ENCODE measurements at regions of chr1 and their contacts with region 1.

Region 1: GRCh38 chr1:172109359-172109758 is 268.1 kb downstream of the DNM3 start:
- DNase-seq: no peak
- H3K4me3 ChIP-seq: no peak overlapping the region
- H3K27ac ChIP-seq: no peak overlapping the region
- H3K4me1 ChIP-seq: no peaks in the 10 kb centered on the region
- H3K27me3 ChIP-seq: no peaks in the 10 kb centered on the region
- CTCF ChIP-seq: no peak

Region 2: GRCh38 chr1:173383351-173383750 is 1274.0 kb after region 1 on chr1:
- CTCF ChIA-PET with region 1: no interaction called
- POLR2A ChIA-PET with region 1: interaction called, 27 read pairs
- intact Hi-C with region 1: no loop called
- DNase-seq: no peak
- H3K4me3 ChIP-seq: no peak overlapping the region
- H3K27ac ChIP-seq: no peak overlapping the region
- H3K4me1 ChIP-seq: peaks cover 10% of the 10 kb centered on the region; the same call in 1 of the 2 replicates
- H3K27me3 ChIP-seq: no peaks in the 10 kb centered on the region
- CTCF ChIP-seq: no peak